GM12878 (cell line): ENCODE measurements at regions of chr3 and their contacts with region 1.

Region 1: GRCh38 chr3:62558549-62559112 is 185.3 kb upstream of the FEZF2 start:
- DNase-seq: no peak
- ATAC-seq: peak; percentile 82
- H3K4me3 ChIP-seq: no peak overlapping the region
- H3K27ac ChIP-seq: no peak overlapping the region
- H3K4me1 ChIP-seq: no peaks in the 10 kb centered on the region
- H3K27me3 ChIP-seq: no peaks in the 10 kb centered on the region
- CTCF ChIP-seq: peak; percentile 35 to 46 (median 36); a peak in 5 of 6 replicates
- EP300 ChIP-seq: no peak
- POLR2A ChIP-seq: no peak
- RAD21 ChIP-seq: peak; percentile 41; the same call in 1 of the 2 replicates

Region 2: DNA sequence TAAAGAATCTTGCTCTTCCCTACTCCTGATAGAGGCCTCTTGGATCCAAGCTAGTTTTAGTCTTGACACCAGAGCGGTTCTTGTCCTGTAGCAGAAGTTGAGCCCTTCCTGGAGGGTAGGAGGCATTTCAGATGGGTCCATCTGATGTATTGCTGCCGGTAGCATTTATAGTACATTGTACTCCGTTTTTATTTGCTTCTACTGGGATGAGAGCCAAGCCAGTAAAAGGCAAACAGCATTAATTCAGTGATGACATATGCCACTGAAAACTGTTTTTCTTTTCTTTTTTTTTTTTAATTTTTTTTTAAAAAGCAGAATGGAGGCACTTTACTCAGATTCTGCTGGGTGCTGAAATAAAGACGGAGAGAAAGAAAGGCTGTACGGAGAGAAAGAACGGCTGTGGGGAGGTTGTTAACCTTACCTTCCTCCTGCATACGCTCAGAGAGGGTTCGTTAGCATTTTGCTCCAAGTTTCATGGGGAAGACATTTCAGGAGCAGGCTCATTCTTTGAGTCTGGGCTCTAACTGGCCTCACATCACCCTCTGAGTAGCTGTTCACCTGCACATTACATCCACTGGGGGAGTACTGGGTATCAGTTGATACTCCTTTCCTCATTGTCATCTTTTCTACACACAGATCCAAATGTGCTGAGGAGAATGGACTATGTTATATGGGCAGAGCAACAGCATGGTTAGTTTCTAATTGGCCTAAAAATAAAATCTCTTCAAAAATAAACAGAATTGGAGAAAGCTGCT is 346.8 kb before region 1 on chr3:
- CTCF ChIA-PET with region 1: no interaction called
- POLR2A ChIA-PET with region 1: no interaction called
- RAD21 ChIA-PET with region 1: no interaction called
- SMC1A ChIA-PET with region 1: no interaction called
- in situ Hi-C with region 1: loop called (anchors 5 kb)
- intact Hi-C with region 1: no loop called
- DNase-seq: no peak
- ATAC-seq: no peak
- H3K4me3 ChIP-seq: no peak overlapping the region
- H3K27ac ChIP-seq: no peak overlapping the region
- H3K4me1 ChIP-seq: no peaks in the 10 kb centered on the region
- H3K27me3 ChIP-seq: no peaks in the 10 kb centered on the region
- CTCF ChIP-seq: no peak
- EP300 ChIP-seq: no peak
- POLR2A ChIP-seq: no peak
- RAD21 ChIP-seq: no peak

Region 3: DNA sequence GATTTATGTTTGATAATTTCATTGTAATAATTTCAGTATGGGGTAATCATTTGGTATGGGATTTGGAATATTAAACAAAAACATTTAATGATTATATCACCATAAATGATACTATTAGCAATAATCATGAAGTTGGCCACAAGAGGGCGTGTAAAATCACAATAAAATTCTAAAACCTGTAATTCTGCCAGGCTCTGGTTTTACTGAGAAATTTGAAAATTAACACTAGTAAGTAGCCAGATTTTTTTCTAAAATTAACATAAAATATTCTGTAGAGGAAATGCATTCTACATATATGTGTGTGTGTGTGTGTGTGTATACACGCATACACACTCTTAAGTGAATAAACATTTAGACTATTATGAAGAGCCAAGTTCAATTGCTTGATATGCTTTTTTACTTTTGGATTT is 225.8 kb before region 1 on chr3:
- CTCF ChIA-PET with region 1: interaction called, 19 read pairs
- POLR2A ChIA-PET with region 1: no interaction called
- RAD21 ChIA-PET with region 1: interaction called, 4 read pairs
- SMC1A ChIA-PET with region 1: interaction called, 24 read pairs
- in situ Hi-C with region 1: loop called (anchors 5 kb)
- intact Hi-C with region 1: loop called (anchors 1 kb)
- DNase-seq: no peak
- ATAC-seq: 0 out of 3 replicates have a peak, but pooled peaks have one; percentile 40
- H3K4me3 ChIP-seq: no peak overlapping the region
- H3K27ac ChIP-seq: no peak overlapping the region
- H3K4me1 ChIP-seq: no peaks in the 10 kb centered on the region
- H3K27me3 ChIP-seq: no peaks in the 10 kb centered on the region
- CTCF ChIP-seq: peak; percentile 37 to 51 (median 47); a peak in 5 of 6 replicates
- EP300 ChIP-seq: no peak
- POLR2A ChIP-seq: no peak
- RAD21 ChIP-seq: 0 out of 2 replicates have a peak, but pooled peaks have one; percentile 18

Region 4: GRCh38 chr3:62803276-62803675 is 244.6 kb after region 1 on chr3:
- CTCF ChIA-PET with region 1: no interaction called
- POLR2A ChIA-PET with region 1: no interaction called
- RAD21 ChIA-PET with region 1: no interaction called
- SMC1A ChIA-PET with region 1: no interaction called
- in situ Hi-C with region 1: no loop called
- intact Hi-C with region 1: no loop called
- DNase-seq: no peak
- ATAC-seq: 0 out of 3 replicates have a peak, but pooled peaks have one; percentile 21
- H3K4me3 ChIP-seq: no peak overlapping the region
- H3K27ac ChIP-seq: no peak overlapping the region
- H3K4me1 ChIP-seq: no peaks in the 10 kb centered on the region
- H3K27me3 ChIP-seq: no peaks in the 10 kb centered on the region; a peak in 1 of 4 replicates
- CTCF ChIP-seq: no peak
- EP300 ChIP-seq: no peak
- POLR2A ChIP-seq: no peak
- RAD21 ChIP-seq: no peak